Activated CD4-positive, alpha-beta memory T cell treated with anti-CD3 and anti-CD28 coated beads for 36 hours (primary cell): ENCODE measurements at regions of chr2 and their contacts with region 1.

Region 1: DNA sequence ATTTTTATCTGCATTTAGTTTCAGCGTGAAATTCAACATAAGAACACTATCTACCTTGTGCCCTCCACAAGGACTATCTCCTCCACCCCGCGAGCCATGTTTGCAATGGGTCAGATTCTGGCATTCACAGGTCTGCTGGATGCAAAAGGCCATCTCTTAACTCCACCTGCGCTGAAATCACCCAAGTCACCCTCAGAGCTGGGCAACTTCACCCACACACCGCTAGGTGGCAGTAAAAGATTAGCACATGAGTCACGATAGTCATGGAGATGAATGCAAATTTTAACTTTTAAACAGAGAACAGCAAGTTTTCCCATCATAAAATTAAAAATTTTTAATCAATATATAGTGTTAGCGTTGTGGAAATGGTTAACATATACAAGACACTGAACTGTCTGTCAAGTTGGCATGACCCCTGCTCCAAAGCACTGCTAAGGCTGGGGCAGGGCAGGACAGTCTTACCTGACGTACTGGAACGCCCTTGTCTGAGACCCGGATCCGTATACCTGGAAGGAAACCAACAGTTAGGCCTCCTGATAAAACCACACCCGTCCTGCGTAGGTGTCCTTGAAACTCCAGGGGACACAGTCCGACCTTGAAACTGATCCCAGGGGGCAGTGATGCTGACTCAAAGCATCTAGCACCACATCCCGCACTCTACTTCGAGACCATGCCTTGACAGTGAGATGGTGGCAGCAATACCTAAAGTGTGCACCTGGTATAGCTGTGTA is 89.6 kb downstream of the UXS1 start:
- DNase-seq: peak; percentile 75
- H3K4me3 Mint-ChIP-seq: no peak overlapping the region
- H3K27ac Mint-ChIP-seq: no peak overlapping the region
- H3K4me1 Mint-ChIP-seq: peaks cover 15% of the 10 kb centered on the region
- H3K27me3 Mint-ChIP-seq: no peaks in the 10 kb centered on the region

Region 2: GRCh38 chr2:105460048-105460732 is 644.3 kb before region 1 on chr2:
- CTCF ChIA-PET with region 1: no interaction called
- POLR2A ChIA-PET with region 1: no interaction called
- intact Hi-C with region 1: no loop called
- DNase-seq: no peak
- H3K4me3 Mint-ChIP-seq: no peak overlapping the region
- H3K27ac Mint-ChIP-seq: no peak overlapping the region
- H3K4me1 Mint-ChIP-seq: no peaks in the 10 kb centered on the region
- H3K27me3 Mint-ChIP-seq: peaks cover 1% of the 10 kb centered on the region

Region 3: DNA sequence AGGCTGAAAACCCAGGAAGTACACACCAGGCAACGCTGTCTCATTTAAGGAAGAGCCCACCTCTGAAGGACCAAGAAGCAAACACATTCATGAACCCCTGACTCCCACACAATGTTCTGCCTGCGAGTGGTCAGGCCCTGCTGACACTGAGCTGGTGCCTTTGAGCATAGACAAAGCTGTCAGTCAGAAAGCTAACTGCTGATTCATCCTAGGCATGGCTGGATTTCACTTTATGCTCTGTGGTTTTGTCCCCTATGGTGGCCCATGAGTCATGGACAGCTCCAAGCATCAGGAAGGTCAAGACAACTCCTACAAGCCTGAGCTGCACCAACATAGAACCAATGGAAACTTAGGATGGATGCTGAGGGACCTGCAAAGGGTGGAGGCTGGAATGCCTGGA is 10.8 kb after region 1 on chr2:
- CTCF ChIA-PET with region 1: interaction called, 12 read pairs
- POLR2A ChIA-PET with region 1: no interaction called
- intact Hi-C with region 1: no loop called
- DNase-seq: no peak
- H3K4me3 Mint-ChIP-seq: no peak overlapping the region
- H3K27ac Mint-ChIP-seq: peak overlapping the region; percentile 66
- H3K4me1 Mint-ChIP-seq: peaks cover 12% of the 10 kb centered on the region
- H3K27me3 Mint-ChIP-seq: no peaks in the 10 kb centered on the region

Region 4: GRCh38 chr2:106160786-106161261 is 56.3 kb after region 1 on chr2:
- CTCF ChIA-PET with region 1: interaction called, 10 read pairs
- POLR2A ChIA-PET with region 1: no interaction called
- intact Hi-C with region 1: loop called (anchors 2 kb)
- DNase-seq: peak; percentile 73
- H3K4me3 Mint-ChIP-seq: peak overlapping the region; percentile 80
- H3K27ac Mint-ChIP-seq: peak overlapping the region; percentile 91
- H3K4me1 Mint-ChIP-seq: peaks cover 85% of the 10 kb centered on the region
- H3K27me3 Mint-ChIP-seq: no peaks in the 10 kb centered on the region

Region 5: DNA sequence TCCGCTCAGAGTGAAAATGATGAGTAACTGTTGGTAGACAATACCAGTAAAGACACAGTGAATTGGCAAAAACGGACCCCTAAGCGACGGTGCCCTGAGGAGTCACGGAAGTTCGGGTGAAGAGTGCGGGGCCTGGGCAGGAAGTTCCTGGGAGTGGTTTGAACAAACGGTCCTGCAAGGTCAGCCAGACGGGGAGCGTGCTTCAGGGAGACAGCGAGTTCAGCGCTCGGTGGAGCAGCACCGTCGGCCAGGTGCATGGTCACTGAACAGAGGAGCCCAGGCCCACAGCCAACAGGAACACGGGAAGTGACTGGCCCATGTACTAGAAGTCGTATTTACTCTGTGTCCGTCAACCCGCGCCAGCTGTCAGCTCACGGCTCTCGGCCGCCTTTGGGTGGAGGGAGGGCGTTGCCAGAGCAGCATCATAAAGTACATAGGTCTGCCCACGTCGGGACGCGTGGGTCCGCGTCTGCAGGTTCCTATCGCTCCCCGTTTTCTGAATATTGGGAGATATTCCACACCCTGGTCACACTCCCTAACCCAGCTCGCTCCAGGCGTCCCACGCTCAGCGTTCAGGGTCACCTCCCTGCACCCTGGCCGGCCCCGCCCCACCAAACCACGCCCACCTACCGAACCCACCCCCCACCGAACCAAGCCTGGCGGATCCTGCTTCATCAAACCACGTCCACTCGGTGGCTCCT is 165.2 kb after region 1 on chr2:
- CTCF ChIA-PET with region 1: no interaction called
- POLR2A ChIA-PET with region 1: no interaction called
- intact Hi-C with region 1: loop called (anchors 10 kb)
- DNase-seq: peak; percentile 67
- H3K4me3 Mint-ChIP-seq: peak overlapping the region; percentile 83
- H3K27ac Mint-ChIP-seq: peak overlapping the region; percentile 14
- H3K4me1 Mint-ChIP-seq: peaks cover 3% of the 10 kb centered on the region
- H3K27me3 Mint-ChIP-seq: peaks cover 3% of the 10 kb centered on the region

Region 6: DNA sequence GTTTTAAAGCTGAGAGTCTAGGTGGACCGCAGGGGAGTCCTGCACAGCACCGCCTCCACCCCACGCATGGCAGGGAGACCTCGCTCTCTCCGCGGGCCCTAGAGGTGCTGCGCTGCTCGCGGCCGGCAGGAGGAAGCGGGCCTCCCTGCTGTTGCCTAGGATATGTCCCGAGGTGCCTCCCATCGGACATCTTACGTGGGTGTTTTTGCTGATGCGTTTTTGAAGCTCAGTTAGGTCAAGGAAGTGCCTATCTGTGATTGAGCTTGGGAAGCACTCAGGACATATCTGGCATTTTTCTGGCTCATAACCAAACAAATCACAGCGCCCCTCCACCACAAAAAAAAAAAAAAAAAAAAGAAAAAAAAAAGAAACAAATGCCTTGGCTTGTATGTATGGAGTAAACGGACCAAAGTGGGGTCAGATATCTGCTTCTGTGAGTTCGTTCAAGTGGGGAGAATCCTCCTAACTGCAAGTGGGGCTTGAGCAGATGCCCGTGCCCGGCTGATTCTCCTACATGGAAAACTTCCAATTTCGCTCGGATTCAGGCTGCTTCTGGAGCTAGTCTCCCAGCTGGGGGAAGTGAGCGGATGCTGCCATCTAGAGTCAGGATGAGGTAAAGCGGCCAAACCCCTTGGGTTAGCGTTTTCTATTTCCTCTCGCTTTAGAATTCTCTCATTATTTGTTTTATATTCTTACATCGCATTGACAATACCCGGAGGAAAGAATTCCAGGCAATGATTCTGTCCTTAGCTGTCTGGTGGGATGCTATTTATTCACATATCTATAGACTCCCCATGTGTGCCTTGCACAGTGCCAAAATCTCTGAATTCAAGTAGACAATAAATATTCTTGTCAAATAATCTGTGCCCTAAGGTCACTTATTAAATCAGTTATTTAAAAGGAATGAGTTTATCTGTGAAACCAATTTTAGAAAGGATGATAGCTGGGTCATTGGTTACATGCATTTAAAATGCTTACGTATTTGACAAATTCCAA is 477.9 kb after region 1 on chr2:
- CTCF ChIA-PET with region 1: interaction called, 13 read pairs
- POLR2A ChIA-PET with region 1: no interaction called
- intact Hi-C with region 1: loop called (anchors 2 kb)
- DNase-seq: peak; percentile 71
- H3K4me3 Mint-ChIP-seq: peak overlapping the region; percentile 83
- H3K27ac Mint-ChIP-seq: no peak overlapping the region
- H3K4me1 Mint-ChIP-seq: peaks cover 14% of the 10 kb centered on the region
- H3K27me3 Mint-ChIP-seq: peaks cover 51% of the 10 kb centered on the region